ENCODE measurements at regions of chrX and their contacts with region 1.

Region 1: DNA sequence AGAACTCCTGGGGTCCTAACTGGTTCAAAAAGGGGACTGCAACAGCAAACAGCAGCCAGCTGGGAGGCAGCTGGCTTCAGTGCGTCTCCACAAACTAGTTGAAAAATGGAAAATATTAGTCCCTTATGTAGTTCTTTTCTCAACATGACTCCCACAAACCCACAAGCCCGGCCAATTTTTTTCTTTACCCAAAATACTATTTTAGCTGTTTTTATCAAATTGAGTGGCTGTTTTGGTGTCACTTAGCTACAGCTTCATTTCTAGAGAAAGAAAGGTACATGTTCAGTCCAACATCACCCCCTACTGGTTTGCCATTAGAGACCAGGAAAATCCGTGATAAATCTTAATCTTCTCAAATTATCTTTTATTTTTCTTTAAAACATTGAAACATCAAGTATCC is 97.2 kb downstream of the GUCY2F start:
- DNase-seq: no peak
- ATAC-seq: no peak
- H3K4me3 Mint-ChIP-seq: no peak overlapping the region
- H3K27ac Mint-ChIP-seq: no peak overlapping the region
- H3K4me1 Mint-ChIP-seq: no peaks in the 10 kb centered on the region
- H3K27me3 Mint-ChIP-seq: peaks cover 1% of the 10 kb centered on the region

Region 2: GRCh38 chrX:108584617-108585211 is 800.0 kb before region 1 on chrX:
- CTCF ChIA-PET with region 1: no interaction called
- POLR2A ChIA-PET with region 1: no interaction called
- intact Hi-C with region 1: loop called in 1 of 2 experiments (anchors 5 kb)
- DNase-seq: peak; percentile 2
- ATAC-seq: no peak
- H3K4me3 Mint-ChIP-seq: no peak overlapping the region
- H3K27ac Mint-ChIP-seq: no peak overlapping the region
- H3K4me1 Mint-ChIP-seq: no peaks in the 10 kb centered on the region
- H3K27me3 Mint-ChIP-seq: no peaks in the 10 kb centered on the region

Region 3: DNA sequence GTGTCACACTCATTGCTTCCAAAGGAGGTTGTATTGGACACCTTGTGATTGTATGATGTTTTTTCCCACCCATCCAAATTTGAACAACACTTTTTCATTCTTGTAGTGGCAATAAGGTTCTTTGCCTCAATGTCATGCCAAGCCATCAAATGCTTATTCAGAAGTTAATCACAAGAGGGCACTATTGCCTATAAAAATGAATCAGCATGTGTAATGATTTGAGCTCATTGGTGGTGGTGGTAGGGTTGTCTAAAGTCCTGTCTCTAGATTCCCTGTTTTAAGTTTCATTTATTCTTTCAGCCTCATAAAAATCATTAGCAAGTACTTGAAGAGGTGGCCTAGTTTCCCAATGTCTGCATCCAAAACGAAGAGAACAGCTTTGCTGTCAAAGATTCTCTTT is 685.3 kb before region 1 on chrX:
- CTCF ChIA-PET with region 1: no interaction called
- POLR2A ChIA-PET with region 1: no interaction called
- intact Hi-C with region 1: loop called in 1 of 2 experiments (anchors 2 kb)
- DNase-seq: no peak
- ATAC-seq: no peak
- H3K4me3 Mint-ChIP-seq: no peak overlapping the region
- H3K27ac Mint-ChIP-seq: no peak overlapping the region
- H3K4me1 Mint-ChIP-seq: no peaks in the 10 kb centered on the region
- H3K27me3 Mint-ChIP-seq: no peaks in the 10 kb centered on the region